ENCODE measurements at regions of chr12 and their contacts with region 1.

Region 1: GRCh38 chr12:39619660-39620433 is at the start of gene ABCD2:
- DNase-seq: peak; percentile 97
- ATAC-seq: peak; percentile 62
- H3K4me3 ChIP-seq: peak within 1 kb of the TSS; percentile 95
- H3K27ac ChIP-seq: peak within 1 kb of the TSS; percentile 98
- H3K4me1 ChIP-seq: peaks cover 16% of the 10 kb centered on the region
- H3K27me3 ChIP-seq: no peaks in the 10 kb centered on the region
- CTCF ChIP-seq: peak; percentile 3 to 30 (median 21); a peak in 2 of 6 replicates
- EP300 ChIP-seq: peak; percentile 32 to 86; a peak in 3 of 4 replicates
- POLR2A ChIP-seq: peak; percentile 62
- RAD21 ChIP-seq: no peak
- polyA plus RNA-seq, gene ABCD2: 4.4 to 5.7 TPM

Region 2: GRCh38 chr12:38892090-38892786 is 727.6 kb before region 1 on chr12:
- CTCF ChIA-PET with region 1: no interaction called
- POLR2A ChIA-PET with region 1: no interaction called
- RAD21 ChIA-PET with region 1: no interaction called
- SMC1A ChIA-PET with region 1: no interaction called
- in situ Hi-C with region 1: loop called (anchors 25 kb)
- intact Hi-C with region 1: no loop called
- DNase-seq: no peak
- ATAC-seq: peak; percentile 84
- H3K4me3 ChIP-seq: no peak overlapping the region
- H3K27ac ChIP-seq: peak overlapping the region; percentile 5; the same call in 1 of the 2 replicates
- H3K4me1 ChIP-seq: no peaks in the 10 kb centered on the region
- H3K27me3 ChIP-seq: no peaks in the 10 kb centered on the region
- CTCF ChIP-seq: no peak
- EP300 ChIP-seq: no peak
- POLR2A ChIP-seq: no peak
- RAD21 ChIP-seq: no peak

Region 3: DNA sequence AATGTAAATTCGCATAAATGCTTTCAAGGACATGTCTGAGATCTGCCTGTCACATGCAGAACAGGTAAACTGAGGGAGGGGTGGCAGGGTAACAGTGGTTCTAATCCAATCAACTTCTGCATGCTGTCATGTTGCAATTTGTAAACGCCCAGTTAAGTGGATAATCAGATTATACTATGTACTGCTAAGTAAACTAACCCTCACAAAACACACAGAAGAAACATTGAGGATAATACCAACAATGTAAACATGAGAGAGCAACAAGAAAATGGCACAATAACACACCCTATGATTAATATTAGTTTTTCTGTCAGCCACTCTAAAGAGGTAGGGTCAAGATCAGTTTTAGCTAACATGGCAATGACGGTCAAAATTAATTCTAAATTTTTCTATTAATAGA is 300.7 kb before region 1 on chr12:
- CTCF ChIA-PET with region 1: interaction called, 4 read pairs
- POLR2A ChIA-PET with region 1: no interaction called
- RAD21 ChIA-PET with region 1: interaction called, 4 read pairs
- SMC1A ChIA-PET with region 1: interaction called, 3 read pairs
- in situ Hi-C with region 1: no loop called
- intact Hi-C with region 1: loop called (anchors 10 kb)
- DNase-seq: no peak
- ATAC-seq: no peak
- H3K4me3 ChIP-seq: no peak overlapping the region
- H3K27ac ChIP-seq: no peak overlapping the region
- H3K4me1 ChIP-seq: no peaks in the 10 kb centered on the region
- H3K27me3 ChIP-seq: no peaks in the 10 kb centered on the region
- CTCF ChIP-seq: no peak
- EP300 ChIP-seq: no peak
- POLR2A ChIP-seq: no peak
- RAD21 ChIP-seq: no peak

Region 4: GRCh38 chr12:39359644-39360043 is 260.2 kb before region 1 on chr12:
- CTCF ChIA-PET with region 1: no interaction called
- POLR2A ChIA-PET with region 1: no interaction called
- RAD21 ChIA-PET with region 1: no interaction called
- SMC1A ChIA-PET with region 1: no interaction called
- in situ Hi-C with region 1: no loop called
- intact Hi-C with region 1: no loop called
- DNase-seq: no peak
- ATAC-seq: no peak
- H3K4me3 ChIP-seq: no peak overlapping the region
- H3K27ac ChIP-seq: no peak overlapping the region
- H3K4me1 ChIP-seq: peaks cover 7% of the 10 kb centered on the region; the same call in 1 of the 2 replicates
- H3K27me3 ChIP-seq: no peaks in the 10 kb centered on the region
- CTCF ChIP-seq: no peak
- EP300 ChIP-seq: no peak
- POLR2A ChIP-seq: no peak
- RAD21 ChIP-seq: no peak

Region 5: GRCh38 chr12:39372929-39373328 is 246.9 kb before region 1 on chr12:
- CTCF ChIA-PET with region 1: interaction called, 3 read pairs
- POLR2A ChIA-PET with region 1: interaction called, 3 read pairs
- RAD21 ChIA-PET with region 1: interaction called, 3 read pairs
- SMC1A ChIA-PET with region 1: interaction called, 3 read pairs
- in situ Hi-C with region 1: no loop called
- intact Hi-C with region 1: loop called (anchors 2 kb)
- DNase-seq: peak; percentile 61
- ATAC-seq: peak; percentile 96
- H3K4me3 ChIP-seq: no peak overlapping the region
- H3K27ac ChIP-seq: peak overlapping the region; percentile 50
- H3K4me1 ChIP-seq: peaks cover 27% of the 10 kb centered on the region
- H3K27me3 ChIP-seq: no peaks in the 10 kb centered on the region
- CTCF ChIP-seq: no peak
- EP300 ChIP-seq: 0 out of 4 replicates have a peak, but pooled peaks of 1 of the 2 experiments have one; percentile 8
- POLR2A ChIP-seq: no peak
- RAD21 ChIP-seq: no peak

Region 6: DNA sequence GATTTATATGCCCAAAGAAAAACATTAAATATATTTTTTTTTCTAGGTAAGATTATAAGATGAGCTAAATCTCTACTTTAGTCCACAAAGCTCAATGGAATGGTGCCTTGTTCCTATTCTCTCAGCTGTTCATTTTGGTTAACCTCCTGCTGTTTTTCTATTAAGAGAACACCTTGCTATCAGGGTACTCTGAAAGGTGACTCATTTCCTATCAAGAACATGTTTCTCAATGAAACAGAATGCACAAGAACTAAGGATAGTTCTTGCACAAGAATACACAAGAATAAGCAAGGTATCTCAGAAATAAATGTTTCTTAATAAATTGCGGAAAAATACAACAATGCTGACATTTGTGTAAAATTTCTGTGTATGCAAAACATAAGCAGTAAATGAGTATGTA is 14.3 kb before region 1 on chr12:
- CTCF ChIA-PET with region 1: interaction called, 19 read pairs
- POLR2A ChIA-PET with region 1: interaction called, 29 read pairs
- RAD21 ChIA-PET with region 1: interaction called, 41 read pairs
- SMC1A ChIA-PET with region 1: interaction called, 101 read pairs
- in situ Hi-C with region 1: no loop called
- intact Hi-C with region 1: no loop called
- DNase-seq: no peak
- ATAC-seq: peak; percentile 41
- H3K4me3 ChIP-seq: no peak overlapping the region
- H3K27ac ChIP-seq: no peak overlapping the region
- H3K4me1 ChIP-seq: no peaks in the 10 kb centered on the region
- H3K27me3 ChIP-seq: no peaks in the 10 kb centered on the region
- CTCF ChIP-seq: no peak
- EP300 ChIP-seq: no peak
- POLR2A ChIP-seq: no peak
- RAD21 ChIP-seq: no peak

Measured in GM12878 (cell line).